Activated T-helper 2 cell treated with anti-CD3 and anti-CD28 coated beads, Interferon-gamma antibody, Interleukin-2, Interleukin-4, amounts not matched to agents 10 μg/mL and 5 μg/mL and 100 μg/mL, durations not matched to agents 14 hours and 24 hours and 36 hours (primary cell): ENCODE measurements at regions of chr4 and their contacts with region 1.

Region 1: DNA sequence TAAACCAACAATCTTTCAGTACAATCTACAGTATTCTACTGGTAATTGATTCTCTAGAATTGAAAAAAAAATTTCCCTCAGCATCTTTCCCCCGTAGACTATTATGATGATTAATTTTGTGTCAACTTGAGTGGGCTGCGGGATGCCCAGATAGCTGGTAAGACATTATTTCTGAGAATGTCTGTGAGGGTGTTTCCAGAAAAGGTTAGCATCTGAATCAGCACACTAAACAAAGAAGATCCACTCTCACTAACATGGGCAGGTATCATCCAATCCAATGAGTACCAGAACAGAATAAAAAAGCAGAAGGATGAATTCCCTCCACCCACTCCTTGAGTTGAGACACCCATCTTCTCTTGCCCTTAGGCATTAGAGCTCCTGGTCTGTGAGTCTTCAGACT is 186.1 kb upstream of the MAB21L2 start:
- DNase-seq: no peak
- H3K4me3 Mint-ChIP-seq: no peak overlapping the region
- H3K27ac Mint-ChIP-seq: peak overlapping the region; percentile 84
- H3K4me1 Mint-ChIP-seq: peaks cover 17% of the 10 kb centered on the region
- H3K27me3 Mint-ChIP-seq: no peaks in the 10 kb centered on the region

Region 2: GRCh38 chr4:148834804-148835631 is 1560.9 kb before region 1 on chr4:
- intact Hi-C with region 1: no loop called
- DNase-seq: no peak
- H3K4me3 Mint-ChIP-seq: no peak overlapping the region
- H3K27ac Mint-ChIP-seq: no peak overlapping the region
- H3K4me1 Mint-ChIP-seq: no peaks in the 10 kb centered on the region
- H3K27me3 Mint-ChIP-seq: no peaks in the 10 kb centered on the region

Region 3: GRCh38 chr4:150251752-150252190 is 144.1 kb before region 1 on chr4:
- intact Hi-C with region 1: no loop called
- DNase-seq: no peak
- H3K4me3 Mint-ChIP-seq: no peak overlapping the region
- H3K27ac Mint-ChIP-seq: no peak overlapping the region
- H3K4me1 Mint-ChIP-seq: no peaks in the 10 kb centered on the region
- H3K27me3 Mint-ChIP-seq: peaks cover 2% of the 10 kb centered on the region

Region 4: DNA sequence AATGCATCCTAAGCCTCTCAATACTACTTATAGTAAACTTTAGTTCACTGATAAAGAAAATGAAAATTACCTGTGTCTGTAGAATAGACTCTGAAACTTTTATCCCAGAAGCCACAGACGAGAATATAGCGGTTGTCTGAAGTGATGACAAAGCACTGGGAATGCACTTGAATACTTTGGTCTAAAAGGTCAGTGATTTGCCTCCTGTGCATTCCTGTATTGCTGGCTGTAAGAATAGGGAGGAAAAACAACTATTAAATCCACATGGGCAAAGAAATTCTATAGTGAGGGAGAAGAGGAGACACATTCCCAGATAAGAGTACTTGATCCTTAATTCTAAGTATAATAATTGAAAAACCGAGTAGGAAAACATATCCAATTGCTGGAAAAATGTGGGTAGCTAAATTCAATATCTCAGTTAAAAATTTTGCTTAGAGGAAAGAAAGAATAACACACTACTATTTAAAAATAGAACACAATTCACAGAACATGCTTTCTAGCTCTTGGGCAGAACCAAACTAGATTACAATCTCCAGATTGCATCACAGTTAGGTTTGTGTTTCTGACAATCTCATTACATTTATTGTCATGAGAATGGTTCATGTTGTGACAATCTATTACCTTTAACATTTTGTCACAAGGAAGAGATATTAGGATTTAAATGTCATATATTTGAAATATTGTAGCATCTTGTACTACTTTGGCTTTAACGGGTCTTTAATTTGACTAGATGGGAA is 85.5 kb before region 1 on chr4:
- intact Hi-C with region 1: no loop called
- DNase-seq: no peak
- H3K4me3 Mint-ChIP-seq: no peak overlapping the region
- H3K27ac Mint-ChIP-seq: no peak overlapping the region
- H3K4me1 Mint-ChIP-seq: no peaks in the 10 kb centered on the region
- H3K27me3 Mint-ChIP-seq: no peaks in the 10 kb centered on the region

Region 5: GRCh38 chr4:150337734-150338133 is 58.1 kb before region 1 on chr4:
- intact Hi-C with region 1: no loop called
- DNase-seq: no peak
- H3K4me3 Mint-ChIP-seq: no peak overlapping the region
- H3K27ac Mint-ChIP-seq: no peak overlapping the region
- H3K4me1 Mint-ChIP-seq: no peaks in the 10 kb centered on the region
- H3K27me3 Mint-ChIP-seq: no peaks in the 10 kb centered on the region

Region 6: GRCh38 chr4:150363721-150364688 is 31.9 kb before region 1 on chr4:
- intact Hi-C with region 1: loop called (anchors 1 kb)
- DNase-seq: no peak
- H3K4me3 Mint-ChIP-seq: no peak overlapping the region
- H3K27ac Mint-ChIP-seq: no peak overlapping the region
- H3K4me1 Mint-ChIP-seq: peaks cover 9% of the 10 kb centered on the region
- H3K27me3 Mint-ChIP-seq: no peaks in the 10 kb centered on the region

Region 7: GRCh38 chr4:150436598-150437370 is 40.9 kb after region 1 on chr4:
- intact Hi-C with region 1: loop called (anchors 1 kb)
- DNase-seq: no peak
- H3K4me3 Mint-ChIP-seq: no peak overlapping the region
- H3K27ac Mint-ChIP-seq: peak overlapping the region; percentile 29
- H3K4me1 Mint-ChIP-seq: peaks cover 12% of the 10 kb centered on the region
- H3K27me3 Mint-ChIP-seq: no peaks in the 10 kb centered on the region

Region 8: DNA sequence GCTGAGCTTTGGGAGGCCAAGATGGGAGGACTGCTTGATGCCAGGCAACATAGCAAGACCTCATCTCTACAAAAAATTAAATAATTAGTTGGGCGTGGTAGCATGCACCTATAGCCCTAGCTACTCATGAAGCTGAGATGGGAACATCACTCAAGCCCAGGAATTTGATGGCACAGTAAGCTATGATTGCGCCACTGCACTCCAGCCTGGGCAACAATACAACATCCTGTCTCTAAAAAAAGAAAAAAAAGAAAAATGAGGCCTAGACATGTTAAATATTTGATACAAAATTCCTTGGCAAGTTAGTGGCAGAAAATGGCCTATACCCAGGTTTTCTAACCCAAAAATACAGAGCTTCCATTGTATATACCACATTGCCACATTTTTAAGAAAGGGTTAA is 98.0 kb after region 1 on chr4:
- intact Hi-C with region 1: loop called (anchors 5 kb)
- DNase-seq: no peak
- H3K4me3 Mint-ChIP-seq: no peak overlapping the region
- H3K27ac Mint-ChIP-seq: no peak overlapping the region
- H3K4me1 Mint-ChIP-seq: peaks cover 8% of the 10 kb centered on the region
- H3K27me3 Mint-ChIP-seq: no peaks in the 10 kb centered on the region